ENCODE measurements at regions of chr17 and their contacts with region 1.

Region 1: DNA sequence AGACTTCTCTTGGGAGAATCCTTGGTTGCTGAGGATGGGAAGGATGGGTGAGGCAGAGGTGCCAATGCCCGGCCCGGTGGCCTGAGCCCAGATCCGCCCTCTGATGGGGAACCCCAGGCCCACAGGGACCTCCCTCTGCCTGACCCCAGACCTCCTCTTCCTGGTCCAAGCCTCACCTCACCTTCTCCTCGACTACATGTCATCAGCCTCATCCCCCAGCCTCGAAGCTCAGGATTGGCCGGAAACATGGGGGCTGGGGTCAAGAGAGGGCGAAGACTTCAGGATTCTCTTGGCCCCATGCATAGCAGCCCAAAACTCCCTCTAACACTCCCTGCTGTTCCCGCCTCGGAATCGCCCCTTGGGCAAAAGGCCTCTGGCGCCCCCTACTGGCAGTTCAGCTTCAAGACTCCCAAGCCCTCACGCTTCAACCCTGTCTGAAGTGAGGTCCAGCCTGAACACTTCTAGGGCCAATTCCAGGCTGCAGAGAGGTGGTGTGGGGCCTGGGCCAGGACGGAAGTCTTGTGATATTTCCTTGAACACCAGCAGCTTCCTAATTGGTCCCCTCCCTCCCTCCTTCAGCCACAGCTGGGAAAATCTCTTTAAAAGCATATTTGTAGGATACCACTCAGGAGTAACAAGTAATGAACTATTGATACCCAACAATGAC is 47.2 kb downstream of the ARHGAP27 start:
- DNase-seq: peak; percentile 93
- ATAC-seq: peak; percentile 95
- H3K4me3 Mint-ChIP-seq: no peak overlapping the region
- H3K27ac Mint-ChIP-seq: peak overlapping the region; percentile 74
- H3K4me1 Mint-ChIP-seq: peaks cover 33% of the 10 kb centered on the region
- H3K27me3 Mint-ChIP-seq: peaks cover 5% of the 10 kb centered on the region

Region 2: DNA sequence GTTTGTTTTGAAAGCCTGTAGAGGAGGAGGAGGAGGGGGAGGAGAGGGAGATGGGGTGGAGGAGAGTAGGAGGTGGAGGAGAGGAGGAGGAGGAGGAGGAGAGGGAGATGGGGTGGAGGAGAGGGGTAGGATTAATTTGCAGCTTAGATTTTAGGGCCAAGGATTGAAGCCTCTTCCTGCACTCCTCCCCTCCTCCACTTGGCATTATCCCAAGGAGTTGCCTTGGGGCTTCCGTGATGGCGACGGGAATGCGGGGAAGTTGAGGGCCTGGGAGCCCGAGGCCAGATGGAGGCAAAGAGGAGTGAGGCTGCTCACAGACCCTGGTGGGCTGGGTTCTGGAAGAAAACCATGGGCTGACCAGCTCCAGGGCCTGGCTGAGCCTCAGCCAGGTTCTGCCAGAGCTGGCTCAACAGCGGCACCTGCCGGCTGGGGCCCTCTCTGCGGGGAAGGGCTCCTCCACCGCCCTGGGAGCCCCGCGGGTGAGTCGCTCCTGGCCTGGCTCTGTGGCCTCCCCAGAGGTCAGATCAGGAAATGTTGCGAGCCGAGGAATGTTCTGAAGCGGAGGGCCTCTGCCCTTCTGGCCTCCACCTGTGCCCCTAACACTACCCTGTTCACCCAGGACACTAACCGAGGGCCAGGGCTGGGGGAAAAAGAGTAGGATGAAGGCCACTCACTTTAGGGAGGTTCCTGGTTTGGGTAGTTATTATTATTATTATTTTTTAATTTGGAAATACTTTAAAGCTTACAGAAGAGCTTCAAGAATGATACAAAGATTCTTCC is 187.7 kb before region 1 on chr17:
- CTCF ChIA-PET with region 1: no interaction called
- POLR2A ChIA-PET with region 1: no interaction called
- DNase-seq: peak; percentile 88
- ATAC-seq: peak; percentile 100
- H3K4me3 Mint-ChIP-seq: no peak overlapping the region
- H3K27ac Mint-ChIP-seq: no peak overlapping the region
- H3K4me1 Mint-ChIP-seq: peaks cover 5% of the 10 kb centered on the region
- H3K27me3 Mint-ChIP-seq: no peaks in the 10 kb centered on the region

Region 3: GRCh38 chr17:45284176-45285140 is 101.0 kb before region 1 on chr17:
- CTCF ChIA-PET with region 1: interaction called, 199 read pairs
- POLR2A ChIA-PET with region 1: interaction called, 4 read pairs
- DNase-seq: peak; percentile 42
- ATAC-seq: peak; percentile 53
- H3K4me3 Mint-ChIP-seq: no peak overlapping the region
- H3K27ac Mint-ChIP-seq: peak overlapping the region; percentile 77
- H3K4me1 Mint-ChIP-seq: peaks cover 26% of the 10 kb centered on the region
- H3K27me3 Mint-ChIP-seq: no peaks in the 10 kb centered on the region

Measured in activated CD8-positive, alpha-beta T cell treated with anti-CD3 and anti-CD28 coated beads, Interleukin-2, amount 10 ng/mL, durations not matched to agents 7 days and 5 days (primary cell).